ENCODE measurements at regions of chr12 and their contacts with region 1.

Region 1: DNA sequence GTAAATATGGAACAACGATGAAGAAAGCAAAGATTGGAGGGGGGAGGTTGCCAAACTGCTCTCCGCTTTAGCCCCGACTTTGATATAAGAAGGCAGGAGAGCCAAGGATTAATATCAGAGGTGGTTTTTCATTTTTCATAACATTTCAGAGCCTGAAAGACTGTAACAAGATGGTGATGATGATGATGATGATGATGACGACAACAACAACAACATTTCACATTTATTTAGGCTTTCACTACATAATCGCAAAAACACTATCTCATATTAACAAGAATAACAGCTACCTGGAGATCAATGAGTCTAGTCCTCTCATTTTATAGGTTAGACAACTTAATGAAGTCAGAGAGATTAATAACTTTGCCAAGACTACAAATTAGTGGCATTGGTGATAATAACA is 86.1 kb downstream of the ANKS1B start:
- DNase-seq: no peak
- ATAC-seq: no peak
- H3K4me3 ChIP-seq: no peak overlapping the region
- H3K27ac ChIP-seq: no peak overlapping the region
- H3K4me1 ChIP-seq: no peaks in the 10 kb centered on the region
- H3K27me3 ChIP-seq: no peaks in the 10 kb centered on the region
- CTCF ChIP-seq: no peak

Region 2: GRCh38 chr12:98653866-98654493 is 1244.7 kb before region 1 on chr12:
- CTCF ChIA-PET with region 1: no interaction called
- POLR2A ChIA-PET with region 1: no interaction called
- in situ Hi-C with region 1: no loop called
- intact Hi-C with region 1: no loop called
- DNase-seq: no peak
- ATAC-seq: peak; percentile 69
- H3K4me3 ChIP-seq: no peak overlapping the region
- H3K27ac ChIP-seq: no peak overlapping the region
- H3K4me1 ChIP-seq: no peaks in the 10 kb centered on the region
- H3K27me3 ChIP-seq: no peaks in the 10 kb centered on the region
- CTCF ChIP-seq: peak; percentile 63; the same call in 1 of the 2 replicates

Region 3: GRCh38 chr12:99493197-99493596 is 405.5 kb before region 1 on chr12:
- CTCF ChIA-PET with region 1: interaction called, 13 read pairs
- POLR2A ChIA-PET with region 1: no interaction called
- in situ Hi-C with region 1: no loop called
- intact Hi-C with region 1: no loop called
- DNase-seq: no peak
- ATAC-seq: no peak
- H3K4me3 ChIP-seq: no peak overlapping the region
- H3K27ac ChIP-seq: no peak overlapping the region
- H3K4me1 ChIP-seq: no peaks in the 10 kb centered on the region
- H3K27me3 ChIP-seq: no peaks in the 10 kb centered on the region
- CTCF ChIP-seq: no peak

Region 4: GRCh38 chr12:99833397-99833796 is 65.3 kb before region 1 on chr12:
- CTCF ChIA-PET with region 1: no interaction called
- POLR2A ChIA-PET with region 1: no interaction called
- in situ Hi-C with region 1: no loop called
- intact Hi-C with region 1: no loop called
- DNase-seq: no peak
- ATAC-seq: no peak
- H3K4me3 ChIP-seq: no peak overlapping the region
- H3K27ac ChIP-seq: no peak overlapping the region
- H3K4me1 ChIP-seq: no peaks in the 10 kb centered on the region
- H3K27me3 ChIP-seq: no peaks in the 10 kb centered on the region
- CTCF ChIP-seq: no peak

Measured in Panc1 (cell line).